Head of caudate nucleus (tissue), 42 donors: ENCODE measurements at regions of chr1 and their contacts with region 1.

Region 1: DNA sequence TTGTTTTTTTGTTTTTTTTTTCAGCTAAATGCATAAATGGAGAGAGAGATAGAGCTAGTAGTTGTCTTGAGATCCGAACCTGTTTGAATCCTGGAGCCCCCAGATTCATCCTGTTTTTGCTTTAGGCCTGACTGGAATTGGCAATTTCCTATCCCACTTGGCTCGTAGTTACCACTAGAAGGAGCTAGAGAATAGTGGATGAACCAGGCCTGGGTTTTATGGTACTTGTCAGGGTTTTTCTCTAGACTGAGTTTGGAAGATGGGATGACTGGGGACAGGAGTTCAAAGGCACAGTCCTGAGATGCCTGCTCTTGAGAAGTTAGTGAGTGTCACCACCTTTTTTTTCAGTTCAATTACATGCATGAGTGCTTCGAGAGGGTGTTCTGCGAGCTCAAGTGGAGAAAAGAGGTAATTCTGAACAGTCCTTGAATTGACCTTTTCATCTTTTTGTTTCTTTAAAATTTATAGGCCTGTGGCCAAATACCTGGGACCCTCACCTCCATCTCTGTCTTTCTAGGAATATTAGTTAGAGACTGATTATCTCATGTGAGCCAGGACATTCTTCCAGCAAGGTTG is 23.4 kb downstream of the CELF3 start:
- DNase-seq: peak in 5 of 42 donors; percentile 13 to 65 (median 33)

Region 2: GRCh38 chr1:151728151-151729054 is 35.2 kb after region 1 on chr1:
- intact Hi-C with region 1: no loop called
- DNase-seq: peak in 35 of 42 donors; percentile 24 to 87 (median 57)

Region 3: DNA sequence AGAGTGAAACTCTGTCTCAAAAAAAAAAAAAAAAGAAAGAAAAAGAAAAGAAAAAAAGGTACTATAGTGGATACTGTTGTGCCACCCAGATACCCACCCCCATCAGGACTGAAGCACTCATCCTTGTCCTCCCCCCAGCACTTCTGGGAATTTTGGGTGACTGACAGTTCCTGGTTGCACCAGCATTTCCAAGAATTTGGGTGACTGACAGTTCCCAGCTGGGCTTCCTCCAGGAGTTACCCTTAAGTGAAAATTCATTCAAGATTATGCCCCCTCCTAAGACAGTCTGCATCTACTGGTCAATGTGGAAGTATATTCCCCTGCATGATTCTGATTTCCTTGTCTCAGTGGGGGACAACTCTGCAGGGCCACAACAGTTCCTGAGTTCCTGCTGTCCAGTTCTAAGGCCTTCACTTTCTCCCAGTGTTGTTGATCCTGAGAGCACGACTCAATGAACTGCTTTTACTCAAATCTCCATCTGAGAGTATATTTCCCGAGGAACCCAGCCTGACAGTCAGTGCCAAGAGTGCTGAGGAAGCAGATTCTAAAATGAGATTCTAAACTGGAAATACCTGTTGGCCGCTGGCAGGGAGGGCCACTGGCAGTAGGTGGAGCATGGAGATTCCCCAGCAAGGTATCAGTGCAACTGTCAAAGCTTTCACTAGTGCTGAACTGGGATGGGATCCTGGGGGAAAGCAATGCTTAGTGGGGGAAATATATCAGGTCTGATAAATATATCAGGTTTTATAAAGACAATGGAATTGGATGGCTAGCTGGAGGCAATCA is 46.6 kb after region 1 on chr1:
- intact Hi-C with region 1: loop called (anchors 5 kb)
- DNase-seq: no peak